Sciatic nerve (tissue), 2 donors: ENCODE measurements at regions of chr4 and their contacts with region 1.

Region 1: DNA sequence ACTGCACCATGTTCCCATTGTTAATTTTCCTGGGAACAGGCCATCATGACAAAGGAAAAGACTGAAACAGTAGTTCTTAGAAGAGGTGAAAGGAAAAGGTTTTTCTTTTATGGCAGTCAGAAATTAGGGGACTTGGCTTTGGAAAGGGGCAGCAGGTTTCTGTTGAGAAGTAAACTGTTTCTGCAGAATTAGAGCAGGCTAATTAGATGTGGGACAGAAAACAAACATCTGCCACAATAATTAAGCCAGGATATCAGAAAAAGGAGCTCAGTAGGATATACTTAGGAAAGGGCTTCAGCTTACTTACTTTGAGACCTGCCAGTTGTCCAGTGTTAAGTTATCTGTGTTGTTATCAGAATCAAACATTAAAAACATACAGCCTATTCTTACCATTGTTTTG is 36.7 kb upstream of the STPG2 start:
- DNase-seq: no peak
- ATAC-seq: no peak

Region 2: DNA sequence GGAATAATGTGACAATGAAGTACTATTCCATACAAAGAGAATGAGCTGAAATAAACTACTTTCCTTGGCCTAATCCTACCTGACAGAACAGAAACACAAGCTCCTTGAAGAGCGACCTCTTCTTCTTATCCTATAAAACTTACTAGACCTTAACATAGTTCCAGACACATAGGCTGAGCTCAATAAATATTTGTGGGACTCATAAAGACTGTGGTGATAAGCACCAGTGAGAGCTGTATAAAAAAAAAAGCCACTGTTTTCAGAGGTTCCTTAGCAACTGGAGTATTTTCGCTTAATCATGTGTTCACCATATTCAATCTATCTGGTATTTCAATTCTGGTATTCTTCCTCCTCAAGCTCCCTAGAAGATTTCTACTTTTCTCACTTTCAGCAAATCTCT is 1166.2 kb before region 1 on chr4:
- intact Hi-C with region 1: no loop called
- DNase-seq: no peak
- ATAC-seq: no peak

Region 3: GRCh38 chr4:98101988-98102387 is 78.0 kb before region 1 on chr4:
- intact Hi-C with region 1: loop called (anchors 2 kb)
- DNase-seq: no peak
- ATAC-seq: no peak